ENCODE measurements at regions of chr3 and their contacts with region 1.

Region 1: DNA sequence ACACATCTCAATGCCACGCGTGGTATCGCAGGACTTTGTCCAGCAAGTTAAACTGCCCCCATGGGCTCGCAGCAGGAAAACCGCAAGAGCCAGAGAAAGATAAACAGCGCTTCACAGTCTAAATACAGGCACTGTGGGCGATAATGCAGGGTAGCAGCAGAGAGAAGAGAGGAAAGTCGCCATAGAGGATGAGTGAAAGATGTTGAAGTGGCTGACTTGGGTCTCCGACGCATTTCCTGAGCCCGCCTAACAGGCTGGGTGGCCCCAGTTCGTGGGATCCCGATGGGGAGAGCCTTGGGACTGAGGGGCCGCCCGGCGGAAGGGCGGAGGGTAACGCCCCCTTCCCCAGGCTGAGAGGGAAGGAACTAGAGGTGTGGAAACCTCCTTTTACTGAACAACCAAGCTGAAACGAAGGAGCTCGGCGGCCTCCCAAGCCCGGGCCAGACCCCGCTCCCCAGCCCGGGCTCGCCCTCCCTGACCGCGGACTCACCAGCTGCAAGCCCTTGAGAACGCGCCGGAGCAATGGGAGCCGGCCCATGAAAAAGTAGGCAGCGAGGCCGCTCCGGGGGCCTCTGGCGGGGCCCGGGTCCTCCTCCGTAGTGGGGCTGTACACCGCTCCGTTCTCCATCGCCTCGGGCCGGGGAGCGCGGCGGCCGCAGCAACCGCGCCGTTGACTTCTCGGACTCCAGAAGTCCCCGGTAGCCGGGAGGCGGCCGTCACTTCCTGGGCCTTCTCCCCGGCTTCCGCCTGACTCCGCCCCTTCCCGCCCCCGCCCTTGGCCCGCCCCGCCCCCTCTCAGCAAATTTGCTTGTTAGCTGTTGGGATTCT is at the start of gene CMTM6:
- DNase-seq: peak; percentile 87 to 91 (median 89)
- ATAC-seq: peak; percentile 69 to 96 (median 95)
- H3K4me3 ChIP-seq: peak within 1 kb of the TSS; percentile 43 to 99 (median 91)
- H3K27ac ChIP-seq: peak within 1 kb of the TSS; percentile 87 to 99 (median 98)
- H3K4me1 ChIP-seq: peaks cover 0 to 53% (median 14%) of the 10 kb centered on the region in 12 donors
- H3K27me3 ChIP-seq: no peaks in the 10 kb centered on the region
- CTCF ChIP-seq: no peak
- POLR2A ChIP-seq: peak; percentile 53 to 57
- total RNA-seq, gene CMTM6: 8.9 to 34.8 (median 12.5) TPM

Region 2: DNA sequence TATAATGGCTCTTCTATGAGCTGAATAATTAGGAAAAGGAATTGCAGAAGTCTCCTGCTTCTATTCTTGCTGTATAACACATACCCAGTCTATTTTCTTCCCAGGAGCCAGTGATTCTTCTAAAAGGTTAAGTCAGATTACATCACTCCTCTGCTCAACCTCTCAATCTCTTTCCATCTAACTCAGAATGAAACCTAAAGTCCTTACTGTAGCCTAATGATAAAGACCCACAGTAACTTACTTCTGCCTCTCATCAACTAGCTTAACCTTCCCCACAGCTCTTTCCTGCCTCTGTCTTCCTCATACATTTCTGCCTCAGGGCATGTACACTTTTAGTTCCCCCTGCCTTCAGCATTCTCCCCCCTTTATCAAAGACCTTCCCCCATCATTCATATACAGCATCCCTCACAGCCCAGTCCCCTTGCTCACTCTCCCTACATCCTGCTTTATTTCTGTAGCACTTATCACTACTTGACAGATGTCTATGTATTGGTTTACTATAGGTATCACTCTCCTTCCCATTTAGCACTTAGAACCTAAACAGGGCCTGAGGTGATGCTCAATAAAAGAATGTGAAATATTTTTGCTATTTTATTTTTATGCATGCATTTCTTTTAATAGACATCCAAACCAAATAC is 28.8 kb after region 1 on chr3:
- intact Hi-C with region 1: no loop called
- DNase-seq: no peak
- ATAC-seq: no peak
- H3K4me3 ChIP-seq: no peak overlapping the region
- H3K27ac ChIP-seq: no peak overlapping the region
- H3K4me1 ChIP-seq: peaks cover 0 to 8% (median 0%) of the 10 kb centered on the region in 12 donors
- H3K27me3 ChIP-seq: no peaks in the 10 kb centered on the region
- CTCF ChIP-seq: no peak
- POLR2A ChIP-seq: no peak

Region 3: GRCh38 chr3:32934150-32934742 is 431.9 kb after region 1 on chr3:
- intact Hi-C with region 1: loop called in 1 of 10 experiments (anchors 10 kb)
- DNase-seq: no peak
- ATAC-seq: no peak
- H3K4me3 ChIP-seq: no peak overlapping the region
- H3K27ac ChIP-seq: no peak overlapping the region
- H3K4me1 ChIP-seq: no peaks in the 10 kb centered on the region
- H3K27me3 ChIP-seq: no peaks in the 10 kb centered on the region
- CTCF ChIP-seq: peak; percentile 32 to 69 (median 55)
- POLR2A ChIP-seq: no peak